ENCODE measurements at regions of chr3 and their contacts with region 1.

Region 1: GRCh38 chr3:51670823-51671733 is at the start of gene TEX264:
- DNase-seq: peak; percentile 94
- ATAC-seq: peak; percentile 66
- H3K4me3 Mint-ChIP-seq: peak within 1 kb of the TSS; percentile 79
- H3K27ac Mint-ChIP-seq: peak within 1 kb of the TSS; percentile 74
- H3K4me1 Mint-ChIP-seq: peaks cover 56% of the 10 kb centered on the region
- H3K27me3 Mint-ChIP-seq: no peaks in the 10 kb centered on the region
- total RNA-seq, gene TEX264: 35.3 to 37.4 TPM

Region 2: DNA sequence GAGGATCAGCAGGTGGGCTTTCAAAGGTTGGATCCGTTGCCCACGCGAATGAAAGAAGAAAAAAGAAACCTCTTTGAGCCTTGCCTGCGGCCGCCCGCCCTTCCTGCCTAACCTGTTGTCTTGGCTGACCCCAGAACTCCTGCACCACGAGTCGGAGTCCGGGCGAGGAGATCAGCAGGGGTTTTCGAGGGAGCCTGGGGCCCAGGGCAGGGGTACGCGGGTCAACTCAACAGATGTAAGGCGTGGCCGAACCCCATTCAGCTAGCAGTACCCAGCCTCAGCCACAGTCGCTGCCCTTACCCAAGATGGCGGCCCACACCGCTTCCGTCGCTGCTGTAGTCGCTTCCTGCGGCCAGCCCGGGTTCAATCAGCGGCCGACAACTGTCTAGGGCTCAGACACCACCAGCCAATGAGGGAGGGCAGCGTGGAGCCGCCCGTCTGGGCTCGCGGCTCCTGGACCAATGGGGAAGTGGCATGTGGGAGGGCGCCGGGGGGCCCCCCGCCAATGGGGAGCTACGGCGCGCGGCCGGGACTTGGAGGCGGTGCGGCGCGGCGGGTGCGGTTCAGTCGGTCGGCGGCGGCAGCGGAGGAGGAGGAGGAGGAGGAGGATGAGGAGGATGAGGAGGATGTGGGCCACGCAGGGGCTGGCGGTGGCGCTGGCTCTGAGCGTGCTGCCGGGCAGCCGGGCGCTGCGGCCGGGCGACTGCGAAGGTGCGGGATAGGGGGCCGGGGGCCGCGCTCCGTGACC is 286.2 kb before region 1 on chr3 and contains the start of gene MANF:
- CTCF ChIA-PET with region 1: interaction called, 8 read pairs
- POLR2A ChIA-PET with region 1: no interaction called
- intact Hi-C with region 1: loop called (anchors 1 kb)
- DNase-seq: peak; percentile 99
- ATAC-seq: peak; percentile 97
- H3K4me3 Mint-ChIP-seq: peak within 1 kb of the TSS; percentile 93
- H3K27ac Mint-ChIP-seq: peak within 1 kb of the TSS; percentile 99
- H3K4me1 Mint-ChIP-seq: peaks cover 46% of the 10 kb centered on the region
- H3K27me3 Mint-ChIP-seq: no peaks in the 10 kb centered on the region
- total RNA-seq, gene MANF: 124 to 129 TPM

Region 3: DNA sequence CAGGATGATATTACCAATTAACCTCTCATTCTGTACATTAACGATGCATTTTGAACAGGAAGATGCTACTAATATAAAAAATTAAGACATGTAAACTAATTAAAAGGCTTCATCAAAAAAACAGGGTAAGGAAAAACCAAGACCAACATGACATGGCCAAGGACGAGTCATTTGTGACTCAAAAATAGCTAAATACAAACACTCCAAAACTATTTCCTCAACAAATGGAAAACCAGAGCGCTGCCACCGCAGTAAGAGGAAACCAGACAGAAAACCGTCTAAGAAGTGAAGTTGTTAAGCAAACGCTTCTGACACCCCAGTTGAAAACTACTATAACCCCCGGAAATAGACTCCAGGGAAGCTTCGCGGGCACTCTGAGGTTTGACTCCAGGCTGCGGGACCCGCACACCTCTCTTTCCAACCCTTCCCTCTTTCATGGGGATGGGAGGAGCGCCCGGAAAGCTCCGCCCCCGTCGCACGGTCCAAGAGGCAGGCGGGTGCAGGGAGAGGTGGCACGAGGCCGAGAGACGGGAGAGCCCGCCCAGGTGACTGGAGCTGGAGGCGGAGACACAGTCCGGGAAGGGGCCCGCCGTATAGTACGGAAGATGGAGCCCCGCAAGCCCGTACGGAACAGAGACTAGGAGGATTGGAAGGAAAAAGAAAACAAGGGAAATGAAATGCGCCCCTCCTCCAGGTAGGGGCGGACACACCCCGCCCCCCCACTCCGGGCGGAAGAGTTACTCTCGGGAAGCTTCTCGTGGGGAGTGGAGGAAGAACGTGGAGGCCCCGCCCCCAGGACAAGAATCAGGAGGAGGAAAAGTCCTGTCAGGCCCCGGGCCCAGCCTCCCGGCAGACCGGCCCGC is 172.0 kb before region 1 on chr3:
- CTCF ChIA-PET with region 1: interaction called, 143 read pairs
- POLR2A ChIA-PET with region 1: interaction called, 11 read pairs
- intact Hi-C with region 1: loop called (anchors 1 kb)
- DNase-seq: peak; percentile 94
- ATAC-seq: peak; percentile 75
- H3K4me3 Mint-ChIP-seq: peak overlapping the region; percentile 88
- H3K27ac Mint-ChIP-seq: peak overlapping the region; percentile 97
- H3K4me1 Mint-ChIP-seq: peaks cover 16% of the 10 kb centered on the region
- H3K27me3 Mint-ChIP-seq: no peaks in the 10 kb centered on the region

Region 4: GRCh38 chr3:51637941-51638471 is 33.1 kb before region 1 on chr3:
- CTCF ChIA-PET with region 1: interaction called, 8 read pairs
- POLR2A ChIA-PET with region 1: no interaction called
- intact Hi-C with region 1: loop called in 1 of 2 experiments (anchors 2 kb)
- DNase-seq: peak; percentile 55
- ATAC-seq: peak; percentile 83
- H3K4me3 Mint-ChIP-seq: no peak overlapping the region
- H3K27ac Mint-ChIP-seq: no peak overlapping the region
- H3K4me1 Mint-ChIP-seq: no peaks in the 10 kb centered on the region
- H3K27me3 Mint-ChIP-seq: no peaks in the 10 kb centered on the region

Region 5: GRCh38 chr3:51687431-51688205 is 16.5 kb after region 1 on chr3:
- CTCF ChIA-PET with region 1: interaction called, 57 read pairs
- POLR2A ChIA-PET with region 1: interaction called, 5 read pairs
- intact Hi-C with region 1: loop called (anchors 1 kb)
- DNase-seq: no peak
- ATAC-seq: no peak
- H3K4me3 Mint-ChIP-seq: no peak overlapping the region
- H3K27ac Mint-ChIP-seq: peak overlapping the region; percentile 83
- H3K4me1 Mint-ChIP-seq: peaks cover 60% of the 10 kb centered on the region
- H3K27me3 Mint-ChIP-seq: no peaks in the 10 kb centered on the region

Region 6: GRCh38 chr3:52536369-52537164 is 865.5 kb after region 1 on chr3 and contains the start of gene UQCC5:
- CTCF ChIA-PET with region 1: no interaction called
- POLR2A ChIA-PET with region 1: interaction called, 3 read pairs
- intact Hi-C with region 1: loop called in 1 of 2 experiments (anchors 2 kb)
- DNase-seq: peak; percentile 99
- ATAC-seq: peak; percentile 91
- H3K4me3 Mint-ChIP-seq: peak within 1 kb of the TSS; percentile 100
- H3K27ac Mint-ChIP-seq: peak within 1 kb of the TSS; percentile 99
- H3K4me1 Mint-ChIP-seq: peaks cover 49% of the 10 kb centered on the region
- H3K27me3 Mint-ChIP-seq: no peaks in the 10 kb centered on the region
- total RNA-seq, gene UQCC5: 12.0 to 12.7 TPM